Dorsolateral prefrontal cortex (tissue), 120 donors: ENCODE measurements at regions of chr7 and their contacts with region 1.

Region 1: GRCh38 chr7:106153891-106154449 is 41.9 kb upstream of the SYPL1 start:
- DNase-seq: peak; percentile 82 to 93 (median 91)
- H3K4me3 ChIP-seq: peak overlapping the region in 19 of 59 donors; percentile 6 to 52 (median 27)
- H3K27ac ChIP-seq: peak overlapping the region in 4 of 59 donors; percentile 11 to 73 (median 22)
- H3K27me3 ChIP-seq: no peaks in the 10 kb centered on the region
- CTCF ChIP-seq: peak; percentile 78 to 99 (median 95)

Region 2: DNA sequence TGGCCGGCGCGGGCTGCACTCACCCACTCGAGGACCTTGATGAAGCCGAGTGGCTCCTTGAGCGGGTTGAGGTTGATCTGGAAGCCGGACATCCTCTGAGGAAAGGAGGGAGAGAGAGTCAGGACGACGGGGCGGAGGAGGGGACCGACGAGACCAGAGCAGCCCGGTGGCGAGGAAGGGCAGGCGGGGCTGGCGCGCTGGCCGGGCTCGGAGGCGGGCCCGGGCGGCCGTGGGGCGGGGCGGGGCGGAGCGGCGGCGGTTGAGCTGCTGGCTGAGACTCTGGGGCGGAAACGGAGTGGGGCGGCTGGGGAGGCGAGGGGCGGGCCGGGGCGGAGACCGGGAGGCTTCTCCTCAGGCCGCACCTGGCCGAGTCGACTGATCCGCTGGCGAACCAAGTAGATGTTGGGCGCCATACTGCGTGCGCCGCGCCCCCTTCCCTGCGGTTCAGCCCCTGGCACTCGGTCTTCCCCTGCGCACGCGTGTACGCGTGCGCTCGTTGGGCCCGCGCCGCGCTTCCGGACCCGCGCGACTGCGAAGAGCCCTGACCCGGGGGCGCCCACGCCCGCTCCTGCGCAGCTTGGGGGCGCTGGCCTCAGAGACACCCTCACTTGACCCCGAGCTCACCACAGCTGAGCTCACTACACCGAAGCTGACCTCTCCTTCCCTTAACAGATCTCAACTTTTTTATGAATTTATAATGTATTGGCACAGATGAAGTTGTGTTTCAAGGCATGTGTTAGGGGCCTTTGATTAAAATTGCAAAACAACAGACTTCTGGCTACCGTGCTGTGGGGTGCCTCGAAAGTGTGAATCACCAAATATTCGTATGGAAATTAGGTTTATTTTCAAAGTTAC is 41.6 kb before region 1 on chr7 and contains the start of gene SYPL1:
- intact Hi-C with region 1: loop called in 1 of 2 experiments (anchors 1 kb)
- DNase-seq: peak; percentile 66 to 92 (median 82)
- H3K4me3 ChIP-seq: peak within 1 kb of the TSS; percentile 59 to 93 (median 80)
- H3K27ac ChIP-seq: peak within 1 kb of the TSS; percentile 65 to 99 (median 95)
- H3K27me3 ChIP-seq: no peaks in the 10 kb centered on the region
- CTCF ChIP-seq: peak in 47 of 56 donors; percentile 7 to 65 (median 37)
- total RNA-seq, gene SYPL1: 21.3 to 84.1 (median 36.2) TPM